Ovary (tissue), 10 donors: ENCODE measurements at regions of chr17 and their contacts with region 1.

Region 1: DNA sequence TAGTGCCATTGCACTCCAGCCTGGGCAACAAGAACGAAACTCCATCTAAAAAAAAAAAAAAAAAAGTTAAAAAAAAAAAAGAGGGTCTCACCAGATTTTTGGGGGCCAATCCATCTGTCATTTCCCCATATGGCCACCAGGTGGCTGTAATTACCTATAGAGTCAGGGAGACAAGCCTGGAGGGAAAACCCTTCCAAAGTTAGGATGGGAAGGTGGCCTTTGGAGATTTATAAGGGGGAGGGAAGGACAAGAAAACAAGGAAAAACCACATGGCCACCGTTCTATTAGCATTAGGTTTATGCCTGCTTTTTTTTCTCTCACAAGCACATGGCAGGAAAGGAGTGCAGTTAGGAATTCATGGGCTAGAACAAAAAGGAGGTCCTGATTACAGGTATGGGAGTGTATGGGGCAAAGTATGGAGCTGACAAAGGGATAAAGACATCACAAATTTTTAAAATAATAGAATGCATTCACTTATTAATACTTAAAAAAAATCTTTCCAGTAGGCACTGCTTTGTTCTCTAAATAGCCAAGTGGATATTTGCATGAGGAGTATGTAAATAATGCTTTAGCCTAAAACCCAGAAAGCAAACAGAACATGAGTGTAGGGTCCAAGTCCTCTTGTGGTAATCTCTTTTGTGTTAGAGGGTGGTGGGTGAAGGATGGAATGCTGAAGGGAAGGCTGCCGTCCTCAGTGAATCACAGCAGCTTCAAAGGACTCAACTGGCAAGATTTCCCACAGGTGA is 5.1 kb downstream of the CYB5D1 start:
- DNase-seq: peak; percentile 33 to 73 (median 52)
- H3K4me3 ChIP-seq: no peak overlapping the region
- H3K27ac ChIP-seq: no peak overlapping the region
- H3K4me1 ChIP-seq: peaks cover 3% of the 10 kb centered on the region
- H3K27me3 ChIP-seq: no peaks in the 10 kb centered on the region
- CTCF ChIP-seq: peak; percentile 56 to 80 (median 68)
- EP300 ChIP-seq: no peak
- POLR2A ChIP-seq: no peak

Region 2: GRCh38 chr17:7786866-7787265 is 76.0 kb before region 1 on chr17:
- intact Hi-C with region 1: no loop called
- DNase-seq: no peak
- H3K4me3 ChIP-seq: no peak overlapping the region
- H3K27ac ChIP-seq: no peak overlapping the region
- H3K4me1 ChIP-seq: no peaks in the 10 kb centered on the region
- H3K27me3 ChIP-seq: no peaks in the 10 kb centered on the region
- CTCF ChIP-seq: no peak
- EP300 ChIP-seq: no peak
- POLR2A ChIP-seq: no peak

Region 3: GRCh38 chr17:7897773-7898172 is 34.9 kb after region 1 on chr17:
- intact Hi-C with region 1: loop called in 2 of 4 experiments (anchors 5 kb)
- DNase-seq: no peak
- H3K4me3 ChIP-seq: no peak overlapping the region
- H3K27ac ChIP-seq: no peak overlapping the region
- H3K4me1 ChIP-seq: no peaks in the 10 kb centered on the region
- H3K27me3 ChIP-seq: no peaks in the 10 kb centered on the region
- CTCF ChIP-seq: peak in 1 of 3 donors; percentile 28
- EP300 ChIP-seq: no peak
- POLR2A ChIP-seq: no peak